Gastrocnemius medialis (tissue), 4 donors: ENCODE measurements at regions of chr2 and their contacts with region 1.

Region 1: GRCh38 chr2:19292007-19292406 is 66.4 kb downstream of the OSR1 start:
- DNase-seq: no peak
- ATAC-seq: no peak
- H3K4me3 ChIP-seq: peak overlapping the region in 1 of 4 donors; percentile 6
- H3K27ac ChIP-seq: no peak overlapping the region
- H3K4me1 ChIP-seq: peaks cover 6 to 8% of the 10 kb centered on the region in 2 donors
- H3K27me3 ChIP-seq: no peaks in the 10 kb centered on the region
- CTCF ChIP-seq: no peak
- POLR2A ChIP-seq: no peak

Region 2: GRCh38 chr2:19219055-19219454 is 73.0 kb before region 1 on chr2:
- in situ Hi-C with region 1: no loop called
- intact Hi-C with region 1: loop called (anchors 2 kb)
- DNase-seq: no peak
- ATAC-seq: no peak
- H3K4me3 ChIP-seq: no peak overlapping the region
- H3K27ac ChIP-seq: no peak overlapping the region
- H3K4me1 ChIP-seq: no peaks in the 10 kb centered on the region
- H3K27me3 ChIP-seq: no peaks in the 10 kb centered on the region
- CTCF ChIP-seq: no peak
- POLR2A ChIP-seq: no peak

Region 3: DNA sequence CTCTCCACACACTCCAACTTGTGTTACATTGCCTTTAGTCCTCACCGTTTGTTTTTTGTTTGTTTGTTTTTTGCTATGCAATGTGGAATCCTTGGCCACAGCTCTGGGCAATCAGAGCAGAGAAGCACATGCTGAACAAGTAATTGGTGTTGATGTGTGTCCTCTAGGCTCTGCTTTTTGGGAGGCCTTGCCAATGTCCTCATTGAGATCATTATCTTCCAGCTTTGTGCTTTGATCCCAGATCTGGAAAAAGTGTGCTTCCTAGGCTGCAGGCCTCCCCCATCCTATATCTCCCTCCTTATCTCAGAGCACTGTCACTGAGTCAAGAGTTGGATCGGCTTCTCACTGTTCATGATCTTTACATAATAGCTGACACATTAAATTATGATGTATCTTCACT is 40.5 kb after region 1 on chr2:
- in situ Hi-C with region 1: no loop called
- intact Hi-C with region 1: no loop called
- DNase-seq: no peak
- ATAC-seq: no peak
- H3K4me3 ChIP-seq: no peak overlapping the region
- H3K27ac ChIP-seq: no peak overlapping the region
- H3K4me1 ChIP-seq: peaks cover 0 to 5% of the 10 kb centered on the region in 2 donors
- H3K27me3 ChIP-seq: no peaks in the 10 kb centered on the region
- CTCF ChIP-seq: no peak
- POLR2A ChIP-seq: no peak

Region 4: DNA sequence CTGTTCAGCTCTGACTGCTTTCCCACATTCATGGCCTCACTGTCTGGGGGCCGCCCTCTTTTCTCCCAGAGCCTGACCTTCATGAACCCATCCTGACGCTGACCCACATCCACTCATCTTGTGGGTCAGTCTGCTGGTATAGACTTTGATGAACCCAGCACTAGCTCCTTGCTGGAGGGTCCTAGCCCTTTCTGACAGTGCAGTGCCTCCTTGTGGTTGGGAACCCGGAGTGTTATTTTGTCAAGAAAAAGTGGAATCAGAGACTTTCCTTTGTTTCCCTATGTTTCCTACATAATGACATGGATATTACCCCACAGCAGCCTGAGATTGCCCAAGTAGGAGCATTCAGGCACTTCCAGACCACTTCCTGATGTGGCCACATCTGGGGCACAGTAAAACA is 85.7 kb after region 1 on chr2:
- in situ Hi-C with region 1: no loop called
- intact Hi-C with region 1: no loop called
- DNase-seq: no peak
- ATAC-seq: no peak
- H3K4me3 ChIP-seq: no peak overlapping the region
- H3K27ac ChIP-seq: no peak overlapping the region
- H3K4me1 ChIP-seq: no peaks in the 10 kb centered on the region
- H3K27me3 ChIP-seq: no peaks in the 10 kb centered on the region
- CTCF ChIP-seq: no peak
- POLR2A ChIP-seq: no peak